ENCODE measurements at regions of chr18 and their contacts with region 1.

Region 1: GRCh38 chr18:62186774-62187542 is at the starts of genes PIGN and RELCH:
- DNase-seq: peak; percentile 92 to 96
- ATAC-seq: peak; percentile 95 to 96
- H3K4me3 ChIP-seq: peak within 1 kb of the TSS; percentile 96
- H3K27ac ChIP-seq: peak within 1 kb of the TSS; percentile 77 to 88
- H3K4me1 ChIP-seq: peaks cover 28% of the 10 kb centered on the region
- CTCF ChIP-seq: no peak
- EP300 ChIP-seq: no peak
- POLR2A ChIP-seq: peak; percentile 89
- RAD21 ChIP-seq: no peak
- polyA plus RNA-seq, gene PIGN: 27.6 and 37.0 TPM in 2 replicates
- polyA plus RNA-seq, gene RELCH: 17.5 and 28.6 TPM in 2 replicates

Region 2: GRCh38 chr18:62199629-62200028 is 12.7 kb after region 1 on chr18:
- CTCF ChIA-PET with region 1: interaction called, 3 read pairs
- POLR2A ChIA-PET with region 1: interaction called, 10 read pairs
- DNase-seq: no peak
- ATAC-seq: no peak
- H3K4me3 ChIP-seq: no peak overlapping the region
- H3K27ac ChIP-seq: no peak overlapping the region
- H3K4me1 ChIP-seq: 0 out of 3 replicates have a peak, but pooled peaks cover 6% of the 10 kb centered on the region
- CTCF ChIP-seq: no peak
- EP300 ChIP-seq: no peak
- POLR2A ChIP-seq: no peak
- RAD21 ChIP-seq: no peak

Region 3: GRCh38 chr18:62249478-62250097 is 62.6 kb after region 1 on chr18:
- CTCF ChIA-PET with region 1: interaction called, 15 read pairs
- POLR2A ChIA-PET with region 1: interaction called, 3 read pairs
- DNase-seq: peak; percentile 28 to 80
- ATAC-seq: peak in 1 of 2 experiments; percentile 64; a peak in 2 of 6 replicates
- H3K4me3 ChIP-seq: no peak overlapping the region
- H3K27ac ChIP-seq: no peak overlapping the region
- H3K4me1 ChIP-seq: no peaks in the 10 kb centered on the region
- CTCF ChIP-seq: peak; percentile 75
- EP300 ChIP-seq: no peak
- POLR2A ChIP-seq: no peak
- RAD21 ChIP-seq: peak; percentile 59

Measured in A549 (cell line).